Naive thymus-derived CD8-positive, alpha-beta T cell (primary cell): ENCODE measurements at regions of chr5 and their contacts with region 1.

Region 1: GRCh38 chr5:43484106-43484849 is 613 bp upstream of the TMEM267 start:
- DNase-seq: peak; percentile 66 to 92 (median 87)
- ATAC-seq: peak; percentile 71 to 73
- H3K4me3 Mint-ChIP-seq: peak overlapping the region; percentile 85 to 99 (median 98)
- H3K27ac Mint-ChIP-seq: peak overlapping the region; percentile 99 to 100 (median 100)
- H3K4me1 Mint-ChIP-seq: peaks cover 13 to 53% (median 41%) of the 10 kb centered on the region in 4 donors
- H3K27me3 Mint-ChIP-seq: no peaks in the 10 kb centered on the region

Region 2: DNA sequence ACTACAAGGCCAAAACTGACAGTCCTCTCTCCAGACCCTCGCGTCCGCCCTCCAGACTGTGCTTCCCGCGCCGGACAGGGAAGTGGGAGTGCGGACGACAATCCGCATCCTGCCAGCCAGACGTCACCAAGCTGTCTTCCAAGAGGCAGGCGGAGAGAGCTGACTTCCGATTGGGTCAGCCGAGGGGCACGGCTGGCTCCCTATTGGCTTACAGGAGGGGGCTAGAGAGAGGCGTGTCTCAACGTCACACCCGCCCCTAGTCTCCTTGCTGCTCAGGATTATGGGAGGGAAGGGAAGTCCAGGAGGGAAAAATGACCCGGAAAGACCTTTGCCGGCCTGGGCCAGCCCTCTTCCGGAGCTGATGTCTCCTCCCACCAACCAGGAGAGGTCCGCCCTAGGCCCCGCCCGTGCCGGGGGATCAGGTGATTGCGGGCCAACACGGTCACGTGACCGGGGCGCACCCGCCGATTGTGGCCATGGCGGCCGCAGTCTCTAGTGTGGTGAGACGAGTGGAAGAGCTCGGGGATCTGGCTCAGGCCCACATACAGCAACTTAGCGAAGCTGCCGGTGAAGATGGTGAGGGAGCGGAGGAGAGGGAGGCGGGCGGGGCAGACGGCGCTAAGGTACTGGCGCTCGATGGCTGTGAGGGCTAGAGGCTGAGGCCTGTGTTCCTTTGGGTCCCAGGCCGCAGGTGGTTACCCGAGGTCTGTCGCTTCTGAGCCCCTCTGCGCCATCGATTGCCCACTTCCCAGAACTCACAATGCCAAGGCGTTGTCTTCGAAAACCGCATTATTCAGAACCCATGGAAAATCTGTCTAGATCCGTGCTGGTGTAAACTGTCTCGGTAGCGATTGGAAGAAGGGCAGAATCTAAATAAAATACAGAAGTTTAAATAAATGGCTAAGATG is 1580.1 kb before region 1 on chr5 and contains the start of gene RIMOC1:
- POLR2A ChIA-PET with region 1: interaction called, 13 read pairs
- DNase-seq: peak; percentile 91 to 99 (median 96)
- ATAC-seq: peak; percentile 87 to 88
- H3K4me3 Mint-ChIP-seq: peak within 1 kb of the TSS; percentile 88 to 100 (median 98)
- H3K27ac Mint-ChIP-seq: peak within 1 kb of the TSS; percentile 95 to 100 (median 98)
- H3K4me1 Mint-ChIP-seq: peaks cover 12 to 46% (median 39%) of the 10 kb centered on the region in 4 donors
- H3K27me3 Mint-ChIP-seq: peaks cover 0 to 5% (median 0%) of the 10 kb centered on the region in 5 donors
- polyA plus RNA-seq, gene RIMOC1: 8.5 to 15.2 (median 9.5) TPM

Region 3: DNA sequence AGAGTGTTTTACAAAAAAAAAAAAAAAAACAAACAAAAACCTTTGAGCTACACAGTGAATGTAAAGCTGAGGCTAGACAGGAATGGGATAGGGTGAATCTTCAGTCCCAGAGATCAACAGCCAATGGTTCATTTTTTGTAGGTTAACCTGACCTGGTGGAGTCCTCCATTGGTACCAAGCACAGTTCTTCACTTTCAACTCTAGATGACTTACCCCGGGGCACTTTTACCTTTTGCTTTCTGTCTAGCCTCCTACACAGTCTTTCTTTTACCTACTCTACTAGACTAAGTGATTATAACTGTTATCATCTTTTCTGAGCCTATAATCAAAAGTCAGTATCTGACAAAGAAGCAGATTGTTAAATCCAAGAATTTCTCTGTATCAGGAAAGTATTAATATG is 495.1 kb before region 1 on chr5:
- POLR2A ChIA-PET with region 1: interaction called, 82 read pairs
- DNase-seq: peak in 3 of 10 donors; percentile 27 to 41 (median 35)
- ATAC-seq: no peak
- H3K4me3 Mint-ChIP-seq: peak overlapping the region; percentile 85 to 100 (median 100)
- H3K27ac Mint-ChIP-seq: peak overlapping the region; percentile 83 to 100 (median 100)
- H3K4me1 Mint-ChIP-seq: peaks cover 28 to 69% (median 65%) of the 10 kb centered on the region in 4 donors
- H3K27me3 Mint-ChIP-seq: no peaks in the 10 kb centered on the region

Region 4: GRCh38 chr5:43019614-43020293 is 464.5 kb before region 1 on chr5:
- POLR2A ChIA-PET with region 1: interaction called, 48 read pairs
- DNase-seq: peak; percentile 68 to 94 (median 86)
- ATAC-seq: peak; percentile 65 to 67
- H3K4me3 Mint-ChIP-seq: peak overlapping the region; percentile 94 to 99 (median 98)
- H3K27ac Mint-ChIP-seq: peak overlapping the region; percentile 97 to 100 (median 100)
- H3K4me1 Mint-ChIP-seq: peaks cover 19 to 44% (median 40%) of the 10 kb centered on the region in 4 donors
- H3K27me3 Mint-ChIP-seq: no peaks in the 10 kb centered on the region

Region 5: DNA sequence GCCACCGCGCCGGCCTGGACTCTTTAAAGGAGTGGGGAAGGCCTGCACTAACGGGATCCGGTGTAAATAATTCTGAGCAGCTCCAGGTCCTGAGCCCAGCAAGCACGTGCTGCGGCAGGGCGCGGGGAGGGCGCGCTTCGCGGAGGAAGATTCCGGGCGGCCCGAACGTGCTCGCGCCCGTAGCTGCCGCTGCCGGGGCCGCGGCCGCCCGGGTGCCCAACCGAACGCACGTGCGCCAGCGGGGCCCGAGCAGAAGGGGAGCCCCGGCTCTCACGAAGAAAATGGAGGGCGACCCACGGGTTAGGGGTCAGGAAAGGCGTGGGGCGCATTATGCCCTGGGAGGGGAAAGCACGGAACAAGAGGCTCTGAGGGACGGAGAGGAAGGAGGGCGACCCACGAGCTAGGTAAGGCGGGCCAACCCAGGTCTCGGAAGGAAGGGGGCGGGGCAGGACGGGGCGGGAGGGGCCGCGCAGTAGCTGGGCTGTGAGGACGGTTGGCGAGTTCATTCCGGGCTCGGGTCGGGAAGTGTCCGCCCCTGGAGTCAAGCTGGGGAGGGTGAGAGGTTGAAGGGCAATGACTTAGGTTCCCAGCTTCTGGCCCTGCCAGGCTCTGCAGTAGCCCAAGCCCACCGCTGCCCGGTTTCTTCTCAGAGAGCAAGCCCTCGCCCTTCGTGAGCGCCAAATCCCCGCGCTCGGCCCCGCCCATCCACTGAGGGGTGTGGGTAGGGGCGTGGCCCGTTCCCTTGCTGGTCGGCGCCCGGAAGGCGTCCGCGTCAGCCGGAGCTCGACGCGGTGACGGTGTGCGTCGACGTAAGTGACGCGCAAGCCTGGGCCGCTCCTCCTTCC is 363.3 kb before region 1 on chr5 and contains the start of gene ZNF131:
- POLR2A ChIA-PET with region 1: interaction called, 113 read pairs
- DNase-seq: peak; percentile 95 to 99 (median 97)
- ATAC-seq: peak; percentile 77 to 86
- H3K4me3 Mint-ChIP-seq: peak within 1 kb of the TSS; percentile 89 to 100 (median 94)
- H3K27ac Mint-ChIP-seq: peak within 1 kb of the TSS; percentile 93 to 99 (median 98)
- H3K4me1 Mint-ChIP-seq: peaks cover 15 to 45% (median 39%) of the 10 kb centered on the region in 4 donors
- H3K27me3 Mint-ChIP-seq: no peaks in the 10 kb centered on the region
- polyA plus RNA-seq, gene ZNF131: 51.8 to 57.1 (median 55.5) TPM

Region 6: GRCh38 chr5:43396762-43397304 is 87.4 kb before region 1 on chr5:
- POLR2A ChIA-PET with region 1: interaction called, 74 read pairs
- DNase-seq: peak; percentile 38 to 80 (median 62)
- ATAC-seq: peak; percentile 95 to 96
- H3K4me3 Mint-ChIP-seq: peak overlapping the region; percentile 94 to 100 (median 96)
- H3K27ac Mint-ChIP-seq: peak overlapping the region; percentile 94 to 100 (median 96)
- H3K4me1 Mint-ChIP-seq: peaks cover 19 to 47% (median 46%) of the 10 kb centered on the region in 4 donors
- H3K27me3 Mint-ChIP-seq: no peaks in the 10 kb centered on the region

Region 7: DNA sequence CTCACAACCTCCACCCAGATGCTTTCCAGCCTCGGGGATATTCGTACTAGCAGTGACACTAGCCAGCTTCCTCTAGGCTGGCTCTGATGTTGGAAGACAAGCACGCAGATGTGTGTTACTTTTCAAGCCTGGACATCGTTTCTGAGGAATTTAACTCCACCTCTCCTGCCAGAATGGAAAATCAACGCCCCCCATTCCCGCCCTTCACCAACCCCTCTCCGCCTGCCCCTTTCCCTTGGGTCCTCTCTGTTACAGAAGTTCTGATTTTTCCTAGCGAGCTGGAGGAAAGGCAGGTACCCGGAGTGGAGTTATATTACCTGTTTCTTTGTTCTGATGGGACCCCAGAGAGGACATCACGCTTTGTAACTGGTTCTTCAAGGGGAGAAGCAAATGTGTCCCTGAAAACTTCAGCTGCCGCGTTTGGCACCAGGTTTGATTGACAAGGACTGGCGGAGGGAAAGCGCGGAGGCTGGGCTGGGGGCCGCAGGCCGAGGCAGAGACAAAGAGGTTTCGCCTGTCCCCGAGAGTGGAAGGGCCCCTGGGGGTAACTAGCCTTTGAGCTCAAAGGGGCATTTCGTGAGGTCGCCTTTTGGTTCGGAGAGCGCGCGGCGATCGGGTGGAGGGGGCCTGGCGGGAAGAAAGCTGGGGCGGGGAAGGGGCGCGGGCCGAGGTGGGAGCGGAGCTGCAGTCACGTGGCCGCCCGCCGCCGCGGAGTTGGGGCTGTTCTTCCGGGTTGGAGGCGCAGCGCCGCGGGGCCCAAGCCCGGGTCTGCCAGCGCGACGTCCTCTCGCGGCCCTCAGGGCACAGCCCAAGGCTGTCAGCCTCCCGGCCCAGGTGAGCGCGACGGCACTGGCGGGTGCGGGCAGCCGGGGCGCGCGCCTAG is 118.4 kb after region 1 on chr5 and contains the start of gene NNT:
- POLR2A ChIA-PET with region 1: interaction called, 66 read pairs
- DNase-seq: peak; percentile 67 to 86 (median 76)
- ATAC-seq: peak; percentile 79 to 85
- H3K4me3 Mint-ChIP-seq: peak within 1 kb of the TSS; percentile 91 to 100 (median 94)
- H3K27ac Mint-ChIP-seq: peak within 1 kb of the TSS; percentile 91 to 98 (median 94)
- H3K4me1 Mint-ChIP-seq: peaks cover 30 to 70% (median 55%) of the 10 kb centered on the region in 4 donors
- H3K27me3 Mint-ChIP-seq: no peaks in the 10 kb centered on the region
- polyA plus RNA-seq, gene NNT: 38.8 to 52.7 (median 49.5) TPM